Activated CD8-positive, alpha-beta memory T cell treated with anti-CD3 and anti-CD28 coated beads, Interleukin-2, amount 10 ng/mL, durations not matched to agents 7 days and 5 days (primary cell): ENCODE measurements at regions of chr10 and their contacts with region 1.

Region 1: GRCh38 chr10:114304017-114304570 is 65.0 kb downstream of the VWA2 start:
- DNase-seq: peak; percentile 88
- ATAC-seq: peak; percentile 70
- H3K4me3 Mint-ChIP-seq: peak overlapping the region; percentile 81
- H3K27ac Mint-ChIP-seq: peak overlapping the region; percentile 84
- H3K4me1 Mint-ChIP-seq: peaks cover 10% of the 10 kb centered on the region
- H3K27me3 Mint-ChIP-seq: no peaks in the 10 kb centered on the region

Region 2: DNA sequence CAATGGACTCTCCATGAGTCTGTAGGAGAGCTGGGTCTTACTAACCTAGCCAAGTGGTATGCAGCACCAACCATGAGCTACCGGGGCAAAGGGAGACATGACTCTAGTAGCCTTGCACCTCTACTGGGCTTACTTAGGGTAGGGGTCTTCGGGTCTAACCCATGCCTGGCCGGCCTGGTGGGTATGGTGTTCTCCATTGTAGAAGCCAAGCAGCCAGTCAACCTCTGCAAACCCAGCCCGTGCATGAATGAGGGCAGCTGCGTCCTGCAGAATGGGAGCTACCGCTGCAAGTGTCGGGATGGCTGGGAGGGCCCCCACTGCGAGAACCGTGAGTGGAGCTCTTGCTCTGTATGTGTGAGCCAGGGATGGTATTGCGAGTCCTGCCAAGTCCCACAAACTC is 14.1 kb before region 1 on chr10:
- CTCF ChIA-PET with region 1: interaction called, 12 read pairs
- DNase-seq: no peak
- ATAC-seq: no peak
- H3K4me3 Mint-ChIP-seq: no peak overlapping the region
- H3K27ac Mint-ChIP-seq: no peak overlapping the region
- H3K4me1 Mint-ChIP-seq: peaks cover 7% of the 10 kb centered on the region
- H3K27me3 Mint-ChIP-seq: no peaks in the 10 kb centered on the region

Region 3: GRCh38 chr10:114432566-114433093 is 128.5 kb after region 1 on chr10:
- CTCF ChIA-PET with region 1: interaction called, 18 read pairs
- DNase-seq: no peak
- ATAC-seq: no peak
- H3K4me3 Mint-ChIP-seq: no peak overlapping the region
- H3K27ac Mint-ChIP-seq: no peak overlapping the region
- H3K4me1 Mint-ChIP-seq: peaks cover 7% of the 10 kb centered on the region
- H3K27me3 Mint-ChIP-seq: no peaks in the 10 kb centered on the region

Region 4: DNA sequence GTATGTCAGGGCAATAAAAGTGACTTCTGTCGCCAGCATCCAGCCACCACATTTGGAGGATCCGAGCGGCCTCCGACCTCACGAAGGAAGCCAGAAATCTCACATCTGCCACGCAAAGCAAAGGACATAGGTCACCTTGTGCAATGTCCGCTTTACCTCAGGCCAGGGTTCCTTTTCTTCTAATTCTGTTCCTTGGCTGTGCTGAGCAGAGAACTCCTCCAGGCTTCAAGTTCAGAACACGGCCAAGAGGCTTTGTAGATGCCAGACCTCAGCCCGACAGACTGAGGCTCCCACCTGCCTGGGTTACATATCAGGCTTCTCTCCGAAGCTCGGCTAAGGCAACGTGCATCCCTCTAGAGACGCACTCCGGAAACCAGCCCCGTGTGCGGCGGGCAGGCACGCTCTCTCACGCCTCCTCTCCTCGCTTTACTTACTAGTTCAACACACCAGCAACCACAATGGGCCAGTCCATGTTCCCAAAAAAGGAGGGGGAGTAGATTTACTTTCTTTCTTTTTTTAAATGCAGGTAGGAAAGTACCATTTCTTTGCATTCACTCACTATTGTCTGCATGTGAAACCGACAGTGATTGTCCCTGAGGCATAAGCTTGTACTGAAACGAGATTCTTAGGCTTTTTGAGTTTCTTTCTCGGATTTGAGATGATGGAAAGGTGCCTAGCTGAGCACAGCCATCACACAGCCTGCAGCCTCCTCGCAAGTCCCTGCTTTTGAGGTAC is 222.6 kb after region 1 on chr10:
- CTCF ChIA-PET with region 1: interaction called, 10 read pairs
- DNase-seq: peak; percentile 95
- ATAC-seq: peak; percentile 98
- H3K4me3 Mint-ChIP-seq: peak overlapping the region; percentile 87
- H3K27ac Mint-ChIP-seq: peak overlapping the region; percentile 96
- H3K4me1 Mint-ChIP-seq: peaks cover 56% of the 10 kb centered on the region
- H3K27me3 Mint-ChIP-seq: no peaks in the 10 kb centered on the region

Region 5: GRCh38 chr10:114550756-114551635 is 246.9 kb after region 1 on chr10:
- CTCF ChIA-PET with region 1: interaction called, 34 read pairs
- DNase-seq: no peak
- ATAC-seq: no peak
- H3K4me3 Mint-ChIP-seq: no peak overlapping the region
- H3K27ac Mint-ChIP-seq: no peak overlapping the region
- H3K4me1 Mint-ChIP-seq: peaks cover 24% of the 10 kb centered on the region
- H3K27me3 Mint-ChIP-seq: no peaks in the 10 kb centered on the region